ENCODE measurements at regions of chr14 and their contacts with region 1.

Region 1: DNA sequence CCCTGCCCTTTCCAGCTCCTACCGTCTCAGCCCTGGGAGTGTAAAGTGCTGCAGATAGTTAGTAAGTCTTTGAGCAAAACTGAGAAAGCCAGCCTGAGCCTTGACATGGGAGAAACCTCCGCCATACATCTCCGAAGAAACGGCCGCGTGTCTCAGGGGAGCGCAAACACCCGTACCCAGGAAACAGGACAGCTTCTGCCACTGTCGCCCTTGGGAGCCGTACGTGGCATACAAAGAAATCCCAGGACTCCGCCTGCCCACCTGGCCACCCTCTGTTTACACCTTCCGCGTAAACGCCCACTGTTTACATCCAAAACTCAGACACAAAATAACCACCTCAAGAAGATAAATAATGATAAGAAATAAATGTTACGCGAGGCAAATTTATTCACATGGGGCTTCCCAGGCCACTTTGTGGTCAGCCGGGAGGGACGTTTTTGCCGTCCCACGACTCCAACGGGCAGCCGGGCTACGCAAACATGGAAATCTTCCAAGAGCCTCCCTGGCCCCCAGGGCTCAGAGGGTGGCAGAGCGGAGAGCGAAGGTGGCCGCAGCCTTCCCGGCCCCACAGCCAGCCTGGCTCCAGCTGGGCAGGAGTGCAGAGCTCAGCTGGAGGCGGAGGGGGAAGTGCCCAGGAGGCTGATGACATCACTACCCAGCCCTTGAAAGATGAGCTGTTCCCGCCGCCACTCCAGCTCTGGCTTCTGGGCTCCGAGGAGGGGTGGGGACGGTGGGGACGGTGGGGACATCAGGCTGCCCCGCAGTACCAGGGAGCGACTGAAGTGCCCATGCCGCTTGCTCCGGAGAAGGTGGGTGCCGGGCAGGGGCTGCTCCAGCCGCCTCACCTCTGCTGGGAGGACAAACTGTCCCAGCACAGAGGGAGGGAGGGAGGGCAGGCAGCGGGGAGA is at the start of gene BDKRB2:
- ATAC-seq: peak; percentile 79 to 100 (median 99)
- H3K4me3 ChIP-seq: peak within 1 kb of the TSS; percentile 7 to 26 (median 16)
- H3K27ac ChIP-seq: no peak within 1 kb of the TSS
- H3K4me1 ChIP-seq: peaks cover 0 to 7% of the 10 kb centered on the region in 2 donors
- total RNA-seq, gene BDKRB2: 0.11 to 321 (median 0.90) TPM

Region 2: GRCh38 chr14:96126339-96126782 is 78.0 kb before region 1 on chr14:
- in situ Hi-C with region 1: loop called in 2 of 9 experiments (anchors 10 to 25 kb)
- ATAC-seq: peak in 2 of 8 experiments; percentile 13 to 87
- H3K4me3 ChIP-seq: no peak overlapping the region
- H3K27ac ChIP-seq: no peak overlapping the region
- H3K4me1 ChIP-seq: peaks cover 8% of the 10 kb centered on the region in 2 donors